ENCODE measurements at regions of chr2 and their contacts with region 1.

Region 1: DNA sequence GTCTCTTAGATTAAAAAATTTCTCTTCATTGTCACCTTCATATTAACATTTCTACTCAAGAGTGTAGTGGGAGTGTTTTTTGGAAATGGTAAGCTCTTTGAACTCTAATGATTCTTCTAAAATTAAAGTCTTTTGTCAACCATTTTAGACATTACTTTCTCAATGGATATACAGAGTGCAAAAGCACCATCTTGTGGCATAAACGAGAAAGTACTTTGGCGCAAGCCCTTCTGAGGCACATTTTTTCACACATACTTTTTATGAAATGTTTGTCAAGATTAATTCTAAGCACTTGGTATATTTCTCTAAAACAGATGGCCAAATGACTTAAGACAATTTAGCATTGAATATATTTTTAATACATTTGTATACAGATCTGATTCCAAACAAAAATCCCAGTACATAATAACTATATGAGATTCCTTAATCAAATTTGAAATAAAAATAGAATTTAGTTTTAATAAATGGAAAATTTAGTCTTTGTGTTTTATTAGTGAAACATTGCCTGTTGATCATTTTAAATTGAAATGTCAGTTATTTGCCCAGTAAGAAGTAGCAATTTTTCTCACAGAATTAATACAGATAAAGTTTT is 63.3 kb upstream of the GALNT5 start:
- DNase-seq: no peak
- H3K4me3 Mint-ChIP-seq: no peak overlapping the region
- H3K27ac Mint-ChIP-seq: no peak overlapping the region
- H3K4me1 Mint-ChIP-seq: peaks cover 14% of the 10 kb centered on the region
- H3K27me3 Mint-ChIP-seq: peaks cover 21% of the 10 kb centered on the region

Region 2: DNA sequence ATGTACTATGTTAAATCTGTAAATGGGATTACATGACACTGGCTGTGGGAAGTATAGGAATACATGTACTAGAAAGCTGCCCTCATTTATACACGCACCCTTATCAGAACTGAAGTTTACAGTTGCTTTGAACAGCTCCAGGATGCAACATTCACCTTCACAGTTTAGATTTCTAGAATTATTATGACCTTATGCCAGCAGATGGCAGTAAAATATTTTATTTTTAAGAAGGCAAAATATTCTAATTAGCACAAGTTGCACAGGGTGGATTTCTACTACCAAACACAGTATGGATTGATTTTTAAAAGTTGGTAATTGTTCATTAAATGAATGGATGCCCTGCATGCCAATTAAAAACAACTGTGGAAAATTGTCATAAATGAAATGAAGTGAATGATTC is 1825.3 kb before region 1 on chr2:
- intact Hi-C with region 1: loop called (anchors 2 kb)
- DNase-seq: no peak
- H3K4me3 Mint-ChIP-seq: no peak overlapping the region
- H3K27ac Mint-ChIP-seq: no peak overlapping the region
- H3K4me1 Mint-ChIP-seq: no peaks in the 10 kb centered on the region
- H3K27me3 Mint-ChIP-seq: no peaks in the 10 kb centered on the region

Region 3: DNA sequence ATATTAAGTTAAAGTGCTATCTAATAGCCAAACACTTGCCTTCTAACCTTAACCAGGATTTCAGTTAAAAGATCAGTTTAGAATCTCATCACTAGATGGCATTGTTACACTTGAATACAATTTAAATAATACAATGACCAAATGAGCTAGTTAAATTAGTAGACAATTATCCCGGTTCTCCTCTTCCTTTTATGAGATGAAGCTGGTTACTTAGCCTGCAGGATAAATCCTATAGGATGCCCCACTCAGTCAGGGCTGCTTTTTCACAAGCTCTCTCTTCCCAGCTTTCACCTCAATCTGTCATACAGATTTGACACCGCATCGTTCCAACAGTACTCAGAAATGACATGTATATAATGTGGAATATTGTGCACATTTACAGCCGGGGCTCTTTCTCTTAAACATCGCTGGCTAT is 1816.9 kb before region 1 on chr2:
- intact Hi-C with region 1: loop called (anchors 2 kb)
- DNase-seq: no peak
- H3K4me3 Mint-ChIP-seq: no peak overlapping the region
- H3K27ac Mint-ChIP-seq: no peak overlapping the region
- H3K4me1 Mint-ChIP-seq: peaks cover 10% of the 10 kb centered on the region
- H3K27me3 Mint-ChIP-seq: peaks cover 5% of the 10 kb centered on the region

Region 4: GRCh38 chr2:156704617-156705016 is 489.6 kb before region 1 on chr2:
- intact Hi-C with region 1: loop called (anchors 5 kb)
- DNase-seq: no peak
- H3K4me3 Mint-ChIP-seq: no peak overlapping the region
- H3K27ac Mint-ChIP-seq: no peak overlapping the region
- H3K4me1 Mint-ChIP-seq: no peaks in the 10 kb centered on the region
- H3K27me3 Mint-ChIP-seq: peaks cover 8% of the 10 kb centered on the region

Region 5: DNA sequence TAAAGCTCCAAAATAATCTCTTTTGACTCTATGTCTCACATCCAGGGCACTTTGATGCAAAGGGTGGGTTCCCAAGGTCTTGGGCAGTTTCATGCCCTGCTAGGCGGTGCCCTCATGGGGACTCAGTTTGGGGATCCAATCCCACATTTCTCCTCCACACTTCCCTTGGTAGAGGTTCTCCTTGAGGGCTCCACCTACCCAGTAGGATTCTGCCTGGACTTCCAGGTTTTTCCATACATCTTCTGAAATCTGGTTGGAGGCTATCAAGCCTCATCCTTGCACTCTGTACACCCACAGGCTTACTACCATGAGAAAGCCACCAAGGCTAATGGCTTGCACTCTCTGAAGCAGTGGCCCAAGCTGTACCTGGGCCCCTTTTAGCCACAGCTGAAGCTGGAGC is 181.2 kb after region 1 on chr2:
- intact Hi-C with region 1: no loop called
- DNase-seq: no peak
- H3K4me3 Mint-ChIP-seq: no peak overlapping the region
- H3K27ac Mint-ChIP-seq: no peak overlapping the region
- H3K4me1 Mint-ChIP-seq: no peaks in the 10 kb centered on the region
- H3K27me3 Mint-ChIP-seq: no peaks in the 10 kb centered on the region